Natural killer cell (primary cell): ENCODE measurements at regions of chr5 and their contacts with region 1.

Region 1: GRCh38 chr5:95822542-95823181 is at the start of gene GLRX:
- DNase-seq: peak in 1 of 2 donors; percentile 75
- ATAC-seq: peak; percentile 22 to 40 (median 37)
- H3K4me3 ChIP-seq: peak within 1 kb of the TSS; percentile 76
- H3K4me3 Mint-ChIP-seq: peak within 1 kb of the TSS; percentile 99
- H3K27ac ChIP-seq: peak within 1 kb of the TSS; percentile 86
- H3K27ac Mint-ChIP-seq: peak within 1 kb of the TSS; percentile 81 to 92
- H3K4me1 ChIP-seq: peaks cover 64% of the 10 kb centered on the region
- H3K4me1 Mint-ChIP-seq: peaks cover 75 to 77% of the 10 kb centered on the region in 2 donors
- H3K27me3 ChIP-seq: no peaks in the 10 kb centered on the region
- H3K27me3 Mint-ChIP-seq: no peaks in the 10 kb centered on the region
- CTCF ChIP-seq: no peak
- total RNA-seq, gene GLRX: 59.2 to 102 (median 62.5) TPM

Region 2: DNA sequence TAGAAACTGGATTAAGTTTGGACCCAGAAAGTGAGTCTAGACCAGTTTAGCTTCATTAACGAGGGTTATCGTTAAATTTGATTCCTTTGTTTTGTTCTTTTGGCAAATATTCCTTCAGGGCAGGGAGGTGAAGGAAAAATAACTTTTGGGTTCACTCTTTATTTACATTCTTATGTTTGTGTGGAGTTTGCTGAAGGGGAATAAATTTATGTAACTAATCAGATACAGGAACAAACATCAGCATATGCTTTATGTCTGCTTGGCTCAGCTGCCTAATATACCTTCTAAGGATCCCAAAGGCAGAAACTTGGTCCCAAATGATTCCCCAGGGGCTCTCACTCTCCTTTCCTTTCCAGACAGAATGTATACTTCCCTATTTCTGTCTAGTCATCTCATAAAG is 670.1 kb before region 1 on chr5:
- intact Hi-C with region 1: no loop called
- DNase-seq: no peak
- ATAC-seq: no peak
- H3K4me3 ChIP-seq: no peak overlapping the region
- H3K4me3 Mint-ChIP-seq: no peak overlapping the region
- H3K27ac ChIP-seq: no peak overlapping the region
- H3K27ac Mint-ChIP-seq: no peak overlapping the region
- H3K4me1 ChIP-seq: no peaks in the 10 kb centered on the region
- H3K4me1 Mint-ChIP-seq: no peaks in the 10 kb centered on the region
- H3K27me3 ChIP-seq: no peaks in the 10 kb centered on the region
- H3K27me3 Mint-ChIP-seq: no peaks in the 10 kb centered on the region
- CTCF ChIP-seq: no peak

Region 3: DNA sequence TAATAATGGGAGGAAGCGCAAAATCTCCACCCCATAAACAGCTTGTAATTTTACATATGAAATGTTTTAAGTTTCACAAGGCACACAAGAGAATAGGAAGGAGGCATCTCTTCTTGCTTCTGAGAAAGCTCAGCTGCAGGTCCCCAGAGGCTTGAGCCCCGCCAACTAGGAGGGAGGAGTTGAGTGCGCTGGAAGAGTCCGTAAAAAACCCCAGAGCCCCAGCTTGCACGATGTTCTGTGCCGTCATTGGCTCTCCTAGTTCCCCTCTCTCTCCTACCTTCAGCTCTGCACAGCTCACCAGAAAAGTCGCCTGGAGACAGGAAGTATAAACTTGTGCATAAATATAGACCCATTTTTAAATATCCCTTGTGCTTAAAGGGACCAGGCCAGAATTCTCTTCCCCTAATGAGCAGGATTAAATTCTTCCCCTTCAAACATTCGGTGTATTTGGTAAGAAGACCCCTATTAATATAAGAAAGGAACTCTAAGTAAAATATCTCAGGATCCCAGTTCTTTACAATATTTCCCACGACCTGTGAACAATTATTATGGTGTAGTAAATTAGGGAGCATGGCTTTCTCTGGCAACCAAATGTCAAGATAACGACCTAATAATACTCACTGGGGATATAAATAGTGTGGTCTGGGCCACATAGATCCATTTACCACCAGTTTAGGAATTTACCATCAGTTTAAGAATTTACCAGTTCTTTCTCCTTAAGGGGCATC is 13.8 kb before region 1 on chr5:
- intact Hi-C with region 1: loop called (anchors 2 kb)
- DNase-seq: peak; percentile 60 to 94
- ATAC-seq: peak; percentile 99 to 100 (median 100)
- H3K4me3 ChIP-seq: no peak overlapping the region
- H3K4me3 Mint-ChIP-seq: peak overlapping the region; percentile 77
- H3K27ac ChIP-seq: peak overlapping the region; percentile 77
- H3K27ac Mint-ChIP-seq: peak overlapping the region; percentile 81 to 94
- H3K4me1 ChIP-seq: peaks cover 44% of the 10 kb centered on the region
- H3K4me1 Mint-ChIP-seq: peaks cover 56 to 58% of the 10 kb centered on the region in 2 donors
- H3K27me3 ChIP-seq: no peaks in the 10 kb centered on the region
- H3K27me3 Mint-ChIP-seq: no peaks in the 10 kb centered on the region
- CTCF ChIP-seq: no peak